BJ (cell line): ENCODE measurements at regions of chr17 and their contacts with region 1.

Region 1: DNA sequence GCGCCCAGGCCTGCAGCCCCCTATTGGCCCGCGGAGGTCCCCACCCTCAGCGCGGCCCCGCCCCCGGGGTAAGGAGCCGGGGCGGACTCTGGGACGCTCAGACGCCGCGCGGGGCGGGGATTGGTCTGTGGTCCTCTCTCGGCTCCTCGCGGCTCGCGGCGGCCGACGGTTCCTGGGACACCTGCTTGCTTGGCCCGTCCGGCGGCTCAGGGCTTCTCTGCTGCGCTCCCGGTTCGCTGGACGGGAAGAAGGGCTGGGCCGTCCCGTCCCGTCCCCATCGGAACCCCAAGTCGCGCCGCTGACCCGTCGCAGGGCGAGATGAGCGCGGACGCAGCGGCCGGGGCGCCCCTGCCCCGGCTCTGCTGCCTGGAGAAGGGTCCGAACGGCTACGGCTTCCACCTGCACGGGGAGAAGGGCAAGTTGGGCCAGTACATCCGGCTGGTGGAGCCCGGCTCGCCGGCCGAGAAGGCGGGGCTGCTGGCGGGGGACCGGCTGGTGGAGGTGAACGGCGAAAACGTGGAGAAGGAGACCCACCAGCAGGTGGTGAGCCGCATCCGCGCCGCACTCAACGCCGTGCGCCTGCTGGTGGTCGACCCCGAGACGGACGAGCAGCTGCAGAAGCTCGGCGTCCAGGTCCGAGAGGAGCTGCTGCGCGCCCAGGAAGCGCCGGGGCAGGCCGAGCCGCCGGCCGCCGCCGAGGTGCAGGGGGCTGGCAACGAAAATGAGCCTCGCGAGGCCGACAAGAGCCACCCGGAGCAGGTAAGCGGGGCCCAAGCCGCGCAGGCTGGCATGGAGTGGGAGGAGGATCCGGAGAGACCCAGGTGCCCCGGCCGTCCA is at the start of gene NHERF1:
- DNase-seq: peak; percentile 66
- H3K4me3 ChIP-seq: peak within 1 kb of the TSS; percentile 64
- H3K27me3 ChIP-seq: no peaks in the 10 kb centered on the region
- CTCF ChIP-seq: peak; percentile 16; the same call in 1 of the 2 replicates
- polyA plus RNA-seq, gene NHERF1: 13.7 and 16.3 TPM in 2 replicates

Region 2: DNA sequence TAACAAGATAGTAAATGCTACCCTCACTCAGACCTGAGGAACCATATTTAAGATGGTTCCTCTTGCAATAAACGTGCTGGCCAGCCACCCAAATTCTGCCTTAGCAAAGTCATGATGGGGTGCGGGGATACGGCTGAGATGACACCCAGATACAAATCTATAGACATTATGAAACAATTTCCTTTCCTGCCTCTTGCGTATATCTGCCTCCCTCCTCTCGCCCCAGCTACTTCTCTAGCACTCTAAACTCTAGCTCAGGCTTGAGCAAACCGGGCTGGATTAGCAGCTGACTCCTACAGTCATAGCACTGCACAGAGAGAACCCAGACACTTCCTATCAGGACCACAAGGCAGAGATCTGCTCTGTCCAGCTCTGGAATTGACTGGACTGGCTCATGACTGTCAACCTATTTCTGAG is 58.3 kb before region 1 on chr17:
- CTCF ChIA-PET with region 1: no interaction called
- POLR2A ChIA-PET with region 1: no interaction called
- DNase-seq: no peak
- H3K4me3 ChIP-seq: no peak overlapping the region
- H3K27me3 ChIP-seq: 0 out of 2 replicates have a peak, but pooled peaks cover 2% of the 10 kb centered on the region
- CTCF ChIP-seq: no peak

Region 3: GRCh38 chr17:74723891-74724290 is 24.9 kb before region 1 on chr17:
- CTCF ChIA-PET with region 1: no interaction called
- POLR2A ChIA-PET with region 1: no interaction called
- DNase-seq: no peak
- H3K4me3 ChIP-seq: no peak overlapping the region
- H3K27me3 ChIP-seq: no peaks in the 10 kb centered on the region
- CTCF ChIP-seq: no peak

Region 4: GRCh38 chr17:74736513-74737298 is 12.0 kb before region 1 on chr17 and contains the start of gene RAB37:
- CTCF ChIA-PET with region 1: interaction called, 14 read pairs
- POLR2A ChIA-PET with region 1: no interaction called
- DNase-seq: no peak
- H3K4me3 ChIP-seq: no peak within 1 kb of the TSS
- H3K27me3 ChIP-seq: peaks cover 30% of the 10 kb centered on the region
- CTCF ChIP-seq: no peak
- polyA plus RNA-seq, gene RAB37: 0.06 and 0.12 TPM in 2 replicates

Region 5: DNA sequence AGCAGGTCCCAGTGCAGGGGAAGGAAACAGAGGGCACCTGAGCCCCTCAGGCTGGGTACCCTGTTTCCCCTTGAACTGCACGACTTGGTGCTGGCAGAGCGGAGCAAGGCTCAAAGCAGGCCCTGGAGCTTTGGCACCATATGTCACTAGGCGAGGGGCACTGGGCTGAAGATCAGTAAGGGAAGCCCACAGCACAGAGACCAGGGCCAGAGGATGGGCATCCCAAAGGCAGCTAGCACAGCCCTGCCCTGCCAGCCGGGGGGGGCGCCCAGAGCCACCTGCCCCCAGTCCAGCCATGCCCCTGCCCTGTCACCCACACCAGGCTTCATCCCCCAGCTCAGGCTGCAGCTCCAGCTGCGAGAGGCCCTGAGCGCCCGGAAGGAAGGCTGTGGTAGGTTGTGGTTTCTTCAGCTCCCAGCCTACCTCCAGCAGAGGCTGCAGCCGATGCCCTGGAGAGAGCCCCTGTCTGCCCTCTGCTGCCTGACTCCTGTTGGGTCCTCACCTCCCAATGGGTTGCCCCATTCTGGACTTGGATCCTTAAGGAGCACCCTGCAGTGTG is 10.6 kb after region 1 on chr17:
- CTCF ChIA-PET with region 1: interaction called, 13 read pairs
- POLR2A ChIA-PET with region 1: no interaction called
- DNase-seq: no peak
- H3K4me3 ChIP-seq: no peak overlapping the region
- H3K27me3 ChIP-seq: no peaks in the 10 kb centered on the region
- CTCF ChIP-seq: no peak

Region 6: DNA sequence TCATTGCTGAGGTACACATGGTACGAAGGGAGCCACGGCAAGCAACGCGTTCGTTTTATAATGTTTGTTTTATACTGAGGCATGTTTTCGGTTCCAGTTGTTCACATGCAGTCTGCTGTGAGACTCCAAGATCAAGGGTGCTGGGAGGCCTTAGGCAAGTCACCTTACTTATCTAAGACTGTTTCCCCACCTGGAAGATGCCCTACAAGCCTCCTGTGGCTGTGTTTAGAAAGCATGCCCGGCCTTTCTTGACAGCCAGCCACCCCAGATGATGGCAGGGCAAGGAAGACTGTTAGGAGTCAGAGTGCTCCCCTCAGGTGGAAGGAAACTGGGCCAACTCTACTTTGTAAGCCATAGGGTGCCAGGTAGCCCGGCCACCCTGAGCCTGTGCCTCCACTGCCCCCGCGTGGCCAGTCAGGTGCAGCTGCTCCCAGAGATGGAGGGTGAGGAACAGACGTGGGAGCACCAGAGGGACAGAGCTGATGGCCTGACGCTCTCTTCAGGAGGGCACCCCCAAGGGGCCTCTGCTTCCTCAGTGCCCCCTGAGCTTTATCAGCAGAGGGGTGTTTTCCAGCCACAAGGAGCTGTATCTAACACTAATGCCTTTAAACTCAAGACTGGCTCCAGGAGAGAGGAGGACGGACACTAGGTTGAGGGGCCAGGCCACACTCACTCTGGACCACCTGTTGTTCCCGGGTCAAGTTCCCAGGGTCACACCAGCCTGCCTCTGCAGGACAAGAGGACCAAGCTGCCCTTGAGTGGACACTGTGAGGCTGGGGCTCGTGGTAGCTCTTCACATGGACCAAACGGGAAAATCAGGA is 22.0 kb after region 1 on chr17:
- CTCF ChIA-PET with region 1: interaction called, 52 read pairs
- POLR2A ChIA-PET with region 1: no interaction called
- DNase-seq: no peak
- H3K4me3 ChIP-seq: no peak overlapping the region
- H3K27me3 ChIP-seq: no peaks in the 10 kb centered on the region
- CTCF ChIP-seq: peak; percentile 85

Region 7: GRCh38 chr17:74776044-74776977 is 27.6 kb after region 1 on chr17 and contains the start of gene NAT9:
- CTCF ChIA-PET with region 1: interaction called, 52 read pairs
- POLR2A ChIA-PET with region 1: no interaction called
- DNase-seq: peak; percentile 66
- H3K4me3 ChIP-seq: peak within 1 kb of the TSS; percentile 84
- H3K27me3 ChIP-seq: no peaks in the 10 kb centered on the region
- CTCF ChIP-seq: no peak
- polyA plus RNA-seq, gene NAT9: 39.5 and 50.6 TPM in 2 replicates

Region 8: GRCh38 chr17:74864866-74865395 is 116.2 kb after region 1 on chr17:
- CTCF ChIA-PET with region 1: interaction called, 115 read pairs
- POLR2A ChIA-PET with region 1: interaction called, 3 read pairs
- DNase-seq: no peak
- H3K4me3 ChIP-seq: no peak overlapping the region
- H3K27me3 ChIP-seq: peaks cover 15% of the 10 kb centered on the region
- CTCF ChIP-seq: peak; percentile 96